Endothelial cell of umbilical vein (primary cell): ENCODE measurements at regions of chr4 and their contacts with region 1.

Region 1: GRCh38 chr4:137819964-137820383 is 287.7 kb upstream of the PCDH18 start:
- DNase-seq: peak; percentile 61
- H3K4me3 ChIP-seq: no peak overlapping the region
- H3K27ac ChIP-seq: no peak overlapping the region
- H3K4me1 ChIP-seq: peaks cover 3% of the 10 kb centered on the region
- H3K27me3 ChIP-seq: no peaks in the 10 kb centered on the region
- CTCF ChIP-seq: peak; percentile 46 to 57
- POLR2A ChIP-seq: no peak

Region 2: DNA sequence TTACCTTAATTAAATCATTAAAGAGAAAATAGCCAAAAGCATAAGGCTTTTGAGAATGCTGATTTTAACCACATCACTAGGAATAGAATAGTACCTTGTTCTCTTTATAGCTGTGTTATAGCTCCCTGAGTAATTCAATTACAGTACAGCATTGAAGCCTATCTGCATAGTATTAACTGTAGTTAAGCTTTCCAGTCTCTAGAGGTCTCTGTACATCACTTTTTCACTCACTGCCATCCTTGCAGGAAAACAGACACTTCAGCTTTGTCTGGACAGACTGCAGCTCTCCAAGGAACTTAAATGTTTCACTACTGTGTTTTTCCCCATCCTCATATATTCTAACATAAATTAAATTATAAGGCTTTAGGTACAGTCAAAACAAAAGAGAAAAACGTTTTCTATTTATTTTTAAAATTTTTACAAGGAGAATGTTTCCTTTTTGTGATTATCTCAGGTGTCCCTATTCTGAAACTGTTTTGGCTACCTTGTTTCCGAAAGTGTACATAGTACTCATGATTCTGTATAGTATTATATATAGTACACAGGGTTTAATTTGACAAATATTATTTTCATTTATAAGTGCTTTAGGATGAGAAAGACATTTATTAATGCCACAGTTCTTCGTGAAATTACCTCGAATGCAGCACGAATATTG is 695.6 kb before region 1 on chr4:
- CTCF ChIA-PET with region 1: interaction called, 13 read pairs
- POLR2A ChIA-PET with region 1: no interaction called
- dilution Hi-C with region 1: no loop called
- intact Hi-C with region 1: no loop called
- DNase-seq: peak; percentile 35
- H3K4me3 ChIP-seq: no peak overlapping the region
- H3K27ac ChIP-seq: no peak overlapping the region
- H3K4me1 ChIP-seq: no peaks in the 10 kb centered on the region
- H3K27me3 ChIP-seq: no peaks in the 10 kb centered on the region
- CTCF ChIP-seq: peak in 1 of 2 donors; percentile 42
- POLR2A ChIP-seq: no peak

Region 3: DNA sequence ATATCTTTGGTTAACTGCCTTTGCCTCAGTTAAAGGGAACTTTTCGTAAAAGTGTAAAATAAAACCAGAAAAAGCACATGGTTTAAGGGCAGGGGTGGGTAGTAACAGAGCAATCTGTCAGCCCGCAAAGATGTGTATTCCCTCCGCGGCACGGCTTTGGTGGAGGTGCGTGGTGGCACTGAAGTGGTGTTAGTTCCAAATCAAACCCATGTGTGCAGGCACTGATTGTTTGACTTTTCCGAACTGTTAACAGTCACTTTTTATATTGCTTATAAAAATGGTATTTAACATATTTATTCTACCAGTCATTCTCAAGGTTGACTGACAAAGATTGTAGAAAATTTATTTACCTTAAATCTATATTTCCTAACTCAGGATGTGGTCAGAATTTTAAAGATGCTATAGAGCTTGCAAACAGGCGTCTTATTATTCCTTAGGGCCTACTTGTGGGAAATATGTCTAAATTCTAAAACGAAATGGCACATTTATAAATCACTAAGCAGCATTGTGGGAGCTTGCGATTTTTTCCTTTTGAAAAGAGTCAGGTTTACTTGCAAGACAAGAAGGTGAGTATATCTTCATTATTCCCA is 15.0 kb before region 1 on chr4:
- CTCF ChIA-PET with region 1: interaction called, 13 read pairs
- POLR2A ChIA-PET with region 1: no interaction called
- dilution Hi-C with region 1: no loop called
- intact Hi-C with region 1: no loop called
- DNase-seq: no peak
- H3K4me3 ChIP-seq: no peak overlapping the region
- H3K27ac ChIP-seq: no peak overlapping the region
- H3K4me1 ChIP-seq: no peaks in the 10 kb centered on the region
- H3K27me3 ChIP-seq: no peaks in the 10 kb centered on the region
- CTCF ChIP-seq: no peak
- POLR2A ChIP-seq: no peak

Region 4: DNA sequence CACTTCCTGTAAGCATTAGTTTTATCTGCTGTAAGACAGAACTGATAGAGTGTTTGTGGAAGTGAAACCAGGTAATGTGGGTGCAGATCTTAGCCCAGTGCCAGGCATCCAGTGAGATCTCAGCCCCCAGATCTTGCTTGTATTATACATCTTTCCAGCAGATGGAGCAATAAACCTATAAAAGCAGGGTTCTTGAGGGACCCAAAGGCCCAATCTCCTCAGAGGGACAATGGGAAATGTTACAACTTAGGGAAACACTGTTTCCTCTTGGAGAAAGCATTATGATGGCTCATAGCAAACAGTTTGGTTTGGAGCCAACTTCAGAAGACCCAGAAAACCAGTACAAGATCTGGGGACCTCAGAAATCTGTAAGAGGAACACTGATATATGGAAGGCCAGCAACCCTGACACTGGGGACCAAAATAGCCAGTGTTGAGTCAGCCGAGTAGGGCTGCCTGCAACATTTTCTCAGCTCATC is 215.8 kb after region 1 on chr4:
- CTCF ChIA-PET with region 1: interaction called, 28 read pairs
- POLR2A ChIA-PET with region 1: no interaction called
- dilution Hi-C with region 1: no loop called
- intact Hi-C with region 1: loop called (anchors 1 kb)
- DNase-seq: peak; percentile 80
- H3K4me3 ChIP-seq: no peak overlapping the region
- H3K27ac ChIP-seq: peak overlapping the region; percentile 76
- H3K4me1 ChIP-seq: peaks cover 35% of the 10 kb centered on the region
- H3K27me3 ChIP-seq: no peaks in the 10 kb centered on the region
- CTCF ChIP-seq: peak; percentile 36 to 68
- POLR2A ChIP-seq: no peak

Region 5: GRCh38 chr4:138522366-138522765 is 702.4 kb after region 1 on chr4:
- CTCF ChIA-PET with region 1: interaction called, 38 read pairs
- POLR2A ChIA-PET with region 1: no interaction called
- dilution Hi-C with region 1: no loop called
- intact Hi-C with region 1: loop called (anchors 1 kb)
- DNase-seq: peak; percentile 21
- H3K4me3 ChIP-seq: no peak overlapping the region
- H3K27ac ChIP-seq: no peak overlapping the region
- H3K4me1 ChIP-seq: no peaks in the 10 kb centered on the region
- H3K27me3 ChIP-seq: no peaks in the 10 kb centered on the region
- CTCF ChIP-seq: peak; percentile 27 to 40
- POLR2A ChIP-seq: no peak

Region 6: DNA sequence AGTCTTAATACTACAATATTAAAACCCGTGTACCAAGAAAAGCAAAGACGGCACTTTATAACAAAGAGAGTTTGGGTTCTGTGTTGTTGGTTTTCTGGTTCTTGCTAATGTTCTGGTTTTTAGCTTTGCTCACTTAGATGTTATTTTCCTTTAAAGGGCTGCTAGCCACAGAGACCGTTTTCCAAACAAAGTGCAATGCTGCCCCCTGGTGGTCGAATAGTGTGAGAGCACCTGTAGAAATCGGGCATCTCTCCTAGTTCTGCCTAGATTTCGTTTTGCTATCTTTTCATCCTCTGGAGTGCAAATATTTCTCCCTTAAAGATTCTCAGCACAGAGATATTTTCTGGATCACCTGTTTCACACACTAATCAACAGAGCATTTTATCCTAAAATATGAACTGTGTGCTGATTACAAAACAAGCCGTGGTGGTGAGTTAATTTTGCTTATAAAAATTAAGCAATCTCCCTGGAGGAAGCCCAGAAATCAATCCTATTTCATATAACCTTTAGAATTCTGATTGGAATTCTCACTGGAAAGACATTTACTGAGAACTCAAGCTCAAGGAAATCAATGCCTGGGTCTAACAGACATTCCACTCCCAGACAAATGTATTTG is 861.1 kb after region 1 on chr4:
- CTCF ChIA-PET with region 1: interaction called, 79 read pairs
- POLR2A ChIA-PET with region 1: no interaction called
- dilution Hi-C with region 1: no loop called
- intact Hi-C with region 1: loop called (anchors 1 kb)
- DNase-seq: peak; percentile 58
- H3K4me3 ChIP-seq: no peak overlapping the region
- H3K27ac ChIP-seq: no peak overlapping the region
- H3K4me1 ChIP-seq: no peaks in the 10 kb centered on the region
- H3K27me3 ChIP-seq: peaks cover 24 to 48% of the 10 kb centered on the region in 2 experiments
- CTCF ChIP-seq: peak; percentile 72 to 76
- POLR2A ChIP-seq: no peak

Region 7: DNA sequence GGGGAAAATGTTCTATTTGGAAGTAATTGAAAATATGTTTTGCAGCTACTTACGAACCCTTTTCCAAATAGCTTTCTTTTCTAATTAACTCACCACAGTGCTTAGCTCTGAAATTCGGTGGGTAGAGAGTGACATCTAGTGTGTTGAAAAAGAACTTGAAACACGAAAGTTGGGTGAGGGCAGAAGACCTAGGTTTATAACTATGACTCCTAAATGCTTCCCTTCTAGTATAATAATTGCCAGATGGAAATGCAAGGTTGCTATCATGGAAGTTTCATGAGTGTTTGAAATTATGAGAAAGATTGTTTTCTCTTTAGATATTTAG is 1118.4 kb after region 1 on chr4:
- CTCF ChIA-PET with region 1: interaction called, 24 read pairs
- POLR2A ChIA-PET with region 1: no interaction called
- dilution Hi-C with region 1: no loop called
- intact Hi-C with region 1: no loop called
- DNase-seq: peak; percentile 59
- H3K4me3 ChIP-seq: no peak overlapping the region
- H3K27ac ChIP-seq: no peak overlapping the region
- H3K4me1 ChIP-seq: no peaks in the 10 kb centered on the region
- H3K27me3 ChIP-seq: no peaks in the 10 kb centered on the region
- CTCF ChIP-seq: peak in 1 of 2 donors; percentile 28
- POLR2A ChIP-seq: no peak